OCI-LY7 (cell line): ENCODE measurements at regions of chr14 and their contacts with region 1.

Region 1: GRCh38 chr14:67426983-67427606 is 15.1 kb upstream of the PLEK2 start:
- DNase-seq: peak; percentile 81
- H3K4me3 ChIP-seq: no peak overlapping the region
- H3K27ac ChIP-seq: no peak overlapping the region
- H3K4me1 ChIP-seq: no peaks in the 10 kb centered on the region
- CTCF ChIP-seq: peak; percentile 90

Region 2: GRCh38 chr14:65772921-65773574 is 1654.0 kb before region 1 on chr14:
- CTCF ChIA-PET with region 1: interaction called, 19 read pairs
- POLR2A ChIA-PET with region 1: no interaction called
- intact Hi-C with region 1: no loop called
- DNase-seq: no peak
- H3K4me3 ChIP-seq: no peak overlapping the region
- H3K27ac ChIP-seq: no peak overlapping the region
- H3K4me1 ChIP-seq: no peaks in the 10 kb centered on the region
- CTCF ChIP-seq: no peak

Region 3: GRCh38 chr14:67166450-67166853 is 260.6 kb before region 1 on chr14:
- CTCF ChIA-PET with region 1: no interaction called
- POLR2A ChIA-PET with region 1: no interaction called
- intact Hi-C with region 1: loop called (anchors 10 kb)
- DNase-seq: peak; percentile 49
- H3K4me3 ChIP-seq: no peak overlapping the region
- H3K27ac ChIP-seq: no peak overlapping the region
- H3K4me1 ChIP-seq: no peaks in the 10 kb centered on the region
- CTCF ChIP-seq: peak; percentile 94

Region 4: GRCh38 chr14:67440541-67440940 is 13.4 kb after region 1 on chr14:
- CTCF ChIA-PET with region 1: no interaction called
- POLR2A ChIA-PET with region 1: no interaction called
- intact Hi-C with region 1: no loop called
- DNase-seq: no peak
- H3K4me3 ChIP-seq: no peak overlapping the region
- H3K27ac ChIP-seq: no peak overlapping the region
- H3K4me1 ChIP-seq: peaks cover 6% of the 10 kb centered on the region
- CTCF ChIP-seq: no peak

Region 5: DNA sequence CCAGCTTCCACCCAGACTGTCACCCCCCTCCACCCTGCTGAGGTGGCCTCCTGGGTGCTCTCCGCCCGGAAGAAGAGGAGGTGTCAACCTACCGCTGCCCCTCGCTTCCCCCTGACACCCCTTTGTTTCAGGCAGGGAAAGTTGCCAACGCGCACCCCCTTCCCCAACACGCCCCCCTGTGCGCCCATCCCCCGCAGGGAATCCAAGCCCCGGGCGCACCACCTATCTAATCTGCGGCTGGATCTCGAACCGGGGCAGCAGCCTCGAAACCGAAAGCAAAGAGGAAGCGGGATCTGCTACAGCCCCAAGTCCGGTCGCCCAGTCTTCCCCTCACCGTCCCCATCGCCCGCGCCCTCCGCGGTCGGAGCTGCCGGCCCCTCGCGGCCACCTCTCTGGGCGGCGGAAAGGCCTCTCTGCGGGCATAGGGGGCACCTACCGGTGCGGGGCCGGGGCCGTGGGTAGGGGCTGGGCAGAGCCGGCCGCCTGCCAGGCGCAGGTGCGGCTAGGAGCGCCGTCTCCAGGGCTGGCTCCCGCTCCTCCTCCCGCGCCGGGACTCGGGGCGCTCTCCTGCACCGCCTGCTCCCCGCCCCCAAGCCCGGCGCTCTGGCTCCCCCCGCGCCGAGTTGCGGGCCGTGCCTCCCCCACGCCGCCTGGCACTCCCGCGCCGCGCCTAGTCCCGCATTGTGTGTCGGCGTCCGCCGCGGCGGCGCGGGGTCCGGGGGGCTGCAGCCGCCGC is 87.7 kb after region 1 on chr14:
- CTCF ChIA-PET with region 1: interaction called, 11 read pairs
- POLR2A ChIA-PET with region 1: interaction called, 6 read pairs
- intact Hi-C with region 1: no loop called
- DNase-seq: peak; percentile 60
- H3K4me3 ChIP-seq: peak overlapping the region; percentile 74
- H3K27ac ChIP-seq: peak overlapping the region; percentile 6
- H3K4me1 ChIP-seq: peaks cover 37% of the 10 kb centered on the region
- CTCF ChIP-seq: no peak

Region 6: DNA sequence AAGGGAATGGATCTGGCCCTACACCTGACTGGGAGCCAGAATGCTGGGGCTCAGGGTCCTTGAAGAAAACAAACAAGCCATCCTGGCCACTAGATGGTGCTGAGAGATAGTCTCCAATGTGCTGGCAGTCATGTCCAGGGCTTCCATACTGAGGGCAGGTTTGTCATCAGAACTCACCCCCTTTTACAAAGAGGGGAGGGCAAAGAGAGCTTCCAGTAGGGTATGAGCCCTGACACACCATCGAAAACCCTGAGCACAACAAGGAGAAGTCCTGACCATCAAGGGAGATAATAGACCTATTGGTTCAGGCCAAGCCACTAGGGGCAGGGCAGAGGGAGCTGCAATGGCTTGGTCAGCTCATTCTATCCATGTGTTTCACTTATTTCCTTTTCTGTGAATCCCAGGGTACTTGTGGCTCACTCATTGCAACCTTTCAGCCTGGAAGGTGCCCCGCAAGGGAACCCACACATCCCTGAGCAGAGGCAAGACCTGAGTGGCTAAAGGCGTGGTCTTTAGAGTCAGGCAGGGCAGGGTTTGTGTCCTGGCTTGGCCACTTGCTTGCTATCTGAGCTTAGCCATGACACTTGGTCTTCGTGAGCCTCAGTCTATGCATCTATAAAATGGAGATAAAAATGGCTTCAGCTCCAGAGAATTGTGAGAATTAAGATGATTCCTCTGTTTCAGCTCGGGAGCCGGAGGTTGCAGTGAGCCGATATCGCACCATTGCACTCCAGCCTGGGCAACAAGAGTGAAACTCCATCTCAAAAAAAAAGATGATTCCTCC is 99.8 kb after region 1 on chr14:
- CTCF ChIA-PET with region 1: interaction called, 4 read pairs
- POLR2A ChIA-PET with region 1: no interaction called
- intact Hi-C with region 1: loop called (anchors 1 kb)
- DNase-seq: peak; percentile 53
- H3K4me3 ChIP-seq: no peak overlapping the region
- H3K27ac ChIP-seq: no peak overlapping the region
- H3K4me1 ChIP-seq: no peaks in the 10 kb centered on the region
- CTCF ChIP-seq: peak; percentile 95

Region 7: GRCh38 chr14:67571272-67571850 is 144.3 kb after region 1 on chr14:
- CTCF ChIA-PET with region 1: interaction called, 21 read pairs
- POLR2A ChIA-PET with region 1: interaction called, 3 read pairs
- intact Hi-C with region 1: loop called (anchors 1 kb)
- DNase-seq: peak; percentile 67
- H3K4me3 ChIP-seq: no peak overlapping the region
- H3K27ac ChIP-seq: no peak overlapping the region
- H3K4me1 ChIP-seq: no peaks in the 10 kb centered on the region
- CTCF ChIP-seq: peak; percentile 96